HepG2 (cell line): ENCODE measurements at regions of chr16 and their contacts with region 1.

Region 1: GRCh38 chr16:12215277-12216105 is 239.0 kb downstream of the SNX29 start:
- DNase-seq: peak; percentile 36
- ATAC-seq: no peak
- H3K4me3 ChIP-seq: no peak overlapping the region
- H3K27ac ChIP-seq: no peak overlapping the region
- H3K4me1 ChIP-seq: peaks cover 50% of the 10 kb centered on the region
- H3K27me3 ChIP-seq: no peaks in the 10 kb centered on the region; a peak in 1 of 5 replicates
- CTCF ChIP-seq: peak; percentile 80
- EP300 ChIP-seq: no peak
- POLR2A ChIP-seq: no peak
- RAD21 ChIP-seq: peak; percentile 93

Region 2: GRCh38 chr16:11915644-11916523 is 299.6 kb before region 1 on chr16 and contains the start of gene GSPT1:
- CTCF ChIA-PET with region 1: no interaction called
- POLR2A ChIA-PET with region 1: interaction called, 4 read pairs
- in situ Hi-C with region 1: no loop called
- intact Hi-C with region 1: loop called (anchors 1 kb)
- DNase-seq: peak; percentile 99
- ATAC-seq: peak; percentile 92
- H3K4me3 ChIP-seq: peak within 1 kb of the TSS; percentile 74 to 98 (median 97)
- H3K27ac ChIP-seq: peak within 1 kb of the TSS; percentile 94
- H3K4me1 ChIP-seq: peaks cover 48% of the 10 kb centered on the region
- H3K27me3 ChIP-seq: no peaks in the 10 kb centered on the region; a peak in 1 of 5 replicates
- CTCF ChIP-seq: peak; percentile 52
- EP300 ChIP-seq: peak; percentile 8 to 53; a peak in 1 of 4 replicates
- POLR2A ChIP-seq: peak; percentile 80 to 97
- RAD21 ChIP-seq: peak; percentile 52
- total RNA-seq, gene GSPT1: 316 and 449 TPM in 2 replicates

Region 3: DNA sequence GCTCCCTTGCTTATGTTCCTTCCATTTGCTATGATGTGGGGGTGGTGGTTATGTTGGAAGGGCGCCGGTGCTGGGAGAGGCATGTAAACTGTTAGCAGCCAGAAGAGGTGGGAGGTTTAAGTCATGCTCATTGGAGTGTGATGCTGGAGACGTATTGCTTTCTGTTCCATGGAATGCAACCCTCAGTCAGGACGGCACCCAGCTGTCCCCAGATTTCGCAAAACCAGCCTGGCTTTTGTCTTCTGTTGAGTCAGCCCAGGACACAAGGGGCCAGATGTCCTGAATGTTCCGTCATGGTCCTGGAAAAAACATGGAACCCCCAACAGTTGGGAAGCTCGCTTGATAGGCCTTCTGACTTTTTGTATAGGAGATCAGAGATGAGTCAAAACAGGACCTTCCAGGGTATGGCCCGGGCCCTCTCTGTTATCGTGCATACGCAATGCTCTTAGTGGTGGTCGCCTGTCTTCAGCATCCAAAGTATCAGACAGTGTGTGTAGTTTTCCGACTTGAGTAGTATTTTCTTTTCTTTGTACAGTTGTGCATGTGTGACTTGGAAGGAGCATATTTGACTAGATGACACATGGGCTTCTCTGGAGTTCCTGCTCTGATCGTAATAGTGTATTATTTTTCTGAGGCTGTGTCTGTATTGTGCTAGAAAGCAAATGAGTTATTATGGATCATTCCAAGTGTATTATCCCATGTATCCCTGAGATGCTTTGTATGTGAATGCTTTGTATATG is 37.1 kb before region 1 on chr16:
- CTCF ChIA-PET with region 1: interaction called, 4 read pairs
- POLR2A ChIA-PET with region 1: interaction called, 8 read pairs
- in situ Hi-C with region 1: no loop called
- intact Hi-C with region 1: loop called (anchors 1 kb)
- DNase-seq: no peak
- ATAC-seq: no peak
- H3K4me3 ChIP-seq: no peak overlapping the region
- H3K27ac ChIP-seq: no peak overlapping the region
- H3K4me1 ChIP-seq: peaks cover 12% of the 10 kb centered on the region
- H3K27me3 ChIP-seq: no peaks in the 10 kb centered on the region
- CTCF ChIP-seq: no peak
- EP300 ChIP-seq: no peak
- POLR2A ChIP-seq: no peak
- RAD21 ChIP-seq: no peak

Region 4: GRCh38 chr16:12188061-12188934 is 27.2 kb before region 1 on chr16:
- CTCF ChIA-PET with region 1: no interaction called
- POLR2A ChIA-PET with region 1: interaction called, 16 read pairs
- in situ Hi-C with region 1: no loop called
- intact Hi-C with region 1: no loop called
- DNase-seq: peak; percentile 59
- ATAC-seq: peak; percentile 73
- H3K4me3 ChIP-seq: no peak overlapping the region
- H3K27ac ChIP-seq: no peak overlapping the region
- H3K4me1 ChIP-seq: peaks cover 28% of the 10 kb centered on the region
- H3K27me3 ChIP-seq: no peaks in the 10 kb centered on the region
- CTCF ChIP-seq: no peak
- EP300 ChIP-seq: peak in 1 of 2 experiments; percentile 44; a peak in 1 of 4 replicates
- POLR2A ChIP-seq: no peak
- RAD21 ChIP-seq: no peak

Region 5: GRCh38 chr16:12199524-12199923 is 16.0 kb before region 1 on chr16:
- CTCF ChIA-PET with region 1: no interaction called
- POLR2A ChIA-PET with region 1: interaction called, 19 read pairs
- in situ Hi-C with region 1: no loop called
- intact Hi-C with region 1: no loop called
- DNase-seq: peak; percentile 67
- ATAC-seq: peak; percentile 44
- H3K4me3 ChIP-seq: no peak overlapping the region
- H3K27ac ChIP-seq: no peak overlapping the region
- H3K4me1 ChIP-seq: peaks cover 29% of the 10 kb centered on the region
- H3K27me3 ChIP-seq: no peaks in the 10 kb centered on the region
- CTCF ChIP-seq: no peak
- EP300 ChIP-seq: peak in 1 of 2 experiments; percentile 59; a peak in 3 of 4 replicates
- POLR2A ChIP-seq: no peak
- RAD21 ChIP-seq: no peak

Region 6: DNA sequence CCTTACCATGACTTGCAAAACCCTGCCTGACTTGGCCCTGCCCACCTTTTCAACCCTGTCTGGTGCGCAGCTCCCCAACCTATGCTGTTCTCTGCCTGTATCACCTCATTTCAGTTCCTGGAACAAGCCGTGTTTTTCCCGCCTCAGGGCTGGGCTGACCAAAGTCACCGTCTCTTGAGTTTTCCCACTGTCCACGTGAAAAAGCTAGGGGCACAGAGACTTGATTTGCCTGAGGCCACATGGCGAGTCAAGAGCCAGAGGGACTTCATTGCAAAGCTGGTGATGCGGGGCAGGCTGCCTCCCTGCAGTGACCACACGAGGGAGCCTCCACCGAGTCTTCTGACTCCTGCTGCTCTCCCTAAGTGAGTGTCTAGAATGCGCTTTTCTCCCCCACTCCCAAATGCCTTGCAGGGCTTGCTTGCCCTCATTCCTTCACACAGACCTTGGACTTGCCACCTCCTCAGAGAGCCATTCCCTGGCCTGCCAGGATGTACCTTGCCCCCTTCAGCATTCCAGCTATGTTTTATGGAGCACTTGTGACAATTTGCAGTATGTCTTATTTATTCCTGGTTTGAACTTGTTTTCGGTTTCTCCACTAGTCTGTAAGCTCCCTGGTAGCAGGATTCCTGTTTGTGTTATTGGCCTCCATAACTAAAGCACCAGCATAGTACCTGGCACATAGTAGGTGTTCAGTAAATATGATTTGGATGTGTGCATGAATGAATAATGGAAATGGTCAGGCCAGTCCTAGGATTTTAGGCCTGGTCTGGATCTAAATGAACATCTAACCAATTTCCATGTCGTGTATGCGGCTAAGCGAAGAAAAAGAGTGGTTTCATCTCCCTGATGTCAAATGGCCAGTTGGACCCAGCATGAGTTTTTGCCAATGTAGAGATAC is 13.4 kb after region 1 on chr16:
- CTCF ChIA-PET with region 1: interaction called, 3 read pairs
- POLR2A ChIA-PET with region 1: interaction called, 55 read pairs
- in situ Hi-C with region 1: no loop called
- intact Hi-C with region 1: no loop called
- DNase-seq: peak; percentile 70
- ATAC-seq: peak; percentile 93
- H3K4me3 ChIP-seq: peak overlapping the region in 2 of 3 experiments; percentile 1 to 44; a peak in 2 of 6 replicates
- H3K27ac ChIP-seq: no peak overlapping the region
- H3K4me1 ChIP-seq: peaks cover 56% of the 10 kb centered on the region
- H3K27me3 ChIP-seq: no peaks in the 10 kb centered on the region
- CTCF ChIP-seq: peak; percentile 98
- EP300 ChIP-seq: no peak
- POLR2A ChIP-seq: no peak
- RAD21 ChIP-seq: peak; percentile 94

Region 7: GRCh38 chr16:12257926-12258561 is 42.6 kb after region 1 on chr16:
- CTCF ChIA-PET with region 1: no interaction called
- POLR2A ChIA-PET with region 1: interaction called, 46 read pairs
- in situ Hi-C with region 1: no loop called
- intact Hi-C with region 1: loop called (anchors 1 kb)
- DNase-seq: peak; percentile 95
- ATAC-seq: peak; percentile 86
- H3K4me3 ChIP-seq: 0 out of 6 replicates have a peak overlapping the region, but pooled peaks of 2 of the 3 experiments have one; percentile 4 to 10
- H3K27ac ChIP-seq: no peak overlapping the region
- H3K4me1 ChIP-seq: peaks cover 66% of the 10 kb centered on the region
- H3K27me3 ChIP-seq: no peaks in the 10 kb centered on the region
- CTCF ChIP-seq: peak; percentile 100
- EP300 ChIP-seq: peak in 1 of 2 experiments; percentile 68; a peak in 3 of 4 replicates
- POLR2A ChIP-seq: no peak
- RAD21 ChIP-seq: peak; percentile 99